CD4-positive, alpha-beta T cell (primary cell): ENCODE measurements at regions of chr11 and their contacts with region 1.

Region 1: DNA sequence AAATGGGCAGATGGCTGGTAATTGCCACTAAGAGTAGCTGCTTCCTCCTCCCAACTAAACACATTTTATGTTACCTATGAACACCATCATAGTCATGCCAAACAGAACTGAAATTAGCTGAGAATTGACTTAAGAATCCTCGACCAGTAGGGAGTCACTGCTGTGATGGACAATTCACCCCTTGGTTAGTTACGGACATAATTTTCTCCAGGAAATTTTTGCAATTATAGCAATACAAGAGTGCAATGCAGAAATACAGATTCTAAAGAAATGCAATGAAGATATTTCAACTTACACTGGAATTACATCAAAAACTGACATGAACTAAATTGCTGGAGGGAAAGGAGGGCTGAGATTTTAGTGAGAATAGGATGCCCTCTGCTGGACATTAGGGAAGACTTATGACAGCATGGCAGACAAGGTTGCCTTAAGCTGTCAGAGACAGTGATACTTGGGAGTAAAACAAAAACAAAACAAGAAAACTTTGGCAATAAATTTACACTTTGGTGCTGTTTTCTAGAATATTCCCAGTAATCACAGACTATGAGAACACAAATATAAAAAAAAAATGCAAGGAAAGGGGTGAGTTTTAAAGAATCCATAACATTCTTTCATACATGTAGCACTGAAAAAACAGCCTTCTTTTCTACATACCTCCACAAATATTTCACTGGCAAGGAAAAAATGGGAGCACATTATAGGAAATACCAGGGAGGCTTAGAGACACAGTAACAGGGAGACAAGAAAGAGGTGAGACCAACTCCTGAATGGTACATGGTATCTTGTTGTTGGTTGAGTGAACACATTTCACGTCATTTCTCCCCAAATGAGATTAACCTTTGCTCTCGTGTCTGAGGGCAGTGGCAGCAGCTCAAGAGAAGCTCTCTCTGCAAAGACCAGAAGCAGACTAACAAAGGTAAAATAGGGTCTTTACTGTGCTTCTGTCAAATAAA is 11.2 kb upstream of the PPP2R1B start:
- DNase-seq: peak in 5 of 14 experiments; percentile 19 to 80 (median 70)
- ATAC-seq: peak; percentile 93
- H3K4me3 ChIP-seq: no peak overlapping the region
- H3K4me3 Mint-ChIP-seq: no peak overlapping the region
- H3K27ac ChIP-seq: no peak overlapping the region
- H3K27ac Mint-ChIP-seq: no peak overlapping the region
- H3K4me1 ChIP-seq: no peaks in the 10 kb centered on the region
- H3K4me1 Mint-ChIP-seq: no peaks in the 10 kb centered on the region
- H3K27me3 ChIP-seq: no peaks in the 10 kb centered on the region
- H3K27me3 Mint-ChIP-seq: no peaks in the 10 kb centered on the region
- CTCF ChIP-seq: peak; percentile 81

Region 2: DNA sequence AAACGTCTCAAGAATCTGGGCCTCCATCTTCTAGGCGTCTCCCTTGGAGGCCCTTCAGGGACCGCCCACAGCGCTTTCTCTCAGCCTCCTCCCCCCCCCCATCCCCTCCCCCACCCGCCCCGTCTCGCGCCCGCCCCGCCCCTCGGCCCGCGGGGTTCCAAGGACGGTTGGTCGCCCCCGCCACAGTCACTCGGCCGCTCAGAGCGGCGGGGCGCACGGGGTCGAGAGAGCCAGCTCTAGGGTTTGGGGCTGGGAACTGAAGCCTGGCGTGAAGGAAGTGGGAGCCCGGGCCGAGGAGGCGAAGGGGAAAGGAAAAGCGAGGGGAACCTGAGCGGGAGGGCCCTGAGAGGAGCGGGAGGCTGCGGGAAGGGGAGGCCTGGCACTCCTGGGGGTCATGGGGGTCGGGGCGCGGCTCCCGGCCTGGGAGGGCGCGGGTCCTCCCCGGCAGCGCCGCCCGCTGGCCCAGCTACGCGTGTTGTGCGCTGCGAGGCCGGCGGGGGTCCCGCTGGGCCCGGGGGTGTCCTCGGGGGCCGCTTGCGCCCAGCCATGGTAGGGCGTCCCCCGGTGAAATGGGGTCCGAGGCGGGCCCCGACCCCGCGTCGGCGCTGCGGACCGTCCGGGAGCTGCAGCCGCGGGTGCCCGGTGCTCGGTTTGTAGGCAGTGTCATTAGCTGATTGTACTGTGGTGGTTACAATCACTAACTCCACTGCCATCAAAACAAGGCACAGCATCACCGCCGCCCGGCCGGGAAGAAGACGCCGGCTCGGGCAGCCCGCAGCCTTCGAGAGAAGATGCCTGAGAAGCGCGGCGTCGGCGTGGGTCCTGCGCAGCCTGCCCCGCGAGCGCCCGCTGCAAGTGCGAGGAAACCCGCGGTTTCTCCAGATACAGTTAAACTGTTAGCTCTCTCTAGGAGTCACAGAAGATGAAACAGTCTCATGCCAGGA is 264.8 kb before region 1 on chr11 and contains the start of gene BTG4:
- CTCF ChIA-PET with region 1: no interaction called
- POLR2A ChIA-PET with region 1: no interaction called
- intact Hi-C with region 1: no loop called
- DNase-seq: peak in 6 of 14 experiments; percentile 8 to 36 (median 23)
- ATAC-seq: peak; percentile 49
- H3K4me3 ChIP-seq: peak within 1 kb of the TSS; percentile 24
- H3K4me3 Mint-ChIP-seq: peak within 1 kb of the TSS; percentile 43
- H3K27ac ChIP-seq: no peak within 1 kb of the TSS
- H3K27ac Mint-ChIP-seq: no peak within 1 kb of the TSS
- H3K4me1 ChIP-seq: peaks cover 9% of the 10 kb centered on the region
- H3K4me1 Mint-ChIP-seq: peaks cover 20% of the 10 kb centered on the region
- H3K27me3 ChIP-seq: peaks cover 24 to 43% of the 10 kb centered on the region in 2 experiments
- H3K27me3 Mint-ChIP-seq: peaks cover 54% of the 10 kb centered on the region
- CTCF ChIP-seq: no peak
- total RNA-seq, gene BTG4: not detected

Region 3: DNA sequence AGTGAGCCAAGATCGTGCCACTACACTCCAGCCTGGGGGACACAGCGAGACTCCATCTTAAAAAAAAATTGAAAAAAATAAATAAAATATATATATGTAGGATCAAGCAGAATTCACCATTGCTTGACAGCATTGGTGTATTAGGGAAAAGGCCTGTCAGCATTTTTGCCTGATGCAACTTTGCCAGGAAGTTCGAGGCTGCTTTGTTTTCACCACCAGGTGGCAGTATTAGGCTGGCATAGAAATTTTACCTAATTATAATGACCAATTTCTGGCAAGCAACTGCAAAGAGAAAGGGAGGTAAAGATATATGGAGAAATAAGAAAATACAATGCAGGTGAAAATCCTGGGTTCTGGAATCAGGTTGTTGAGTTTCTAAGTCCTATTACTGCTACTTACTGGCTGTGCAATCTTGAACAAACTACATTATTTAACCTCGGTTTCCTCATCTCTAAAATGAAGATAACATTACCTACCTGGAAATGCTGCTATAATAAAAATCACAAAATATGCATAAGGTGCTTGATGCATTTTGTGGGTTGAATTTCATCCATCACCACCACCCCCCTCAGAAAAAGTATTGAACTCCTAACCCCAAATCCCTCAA is 212.2 kb before region 1 on chr11:
- CTCF ChIA-PET with region 1: interaction called, 4 read pairs
- POLR2A ChIA-PET with region 1: no interaction called
- intact Hi-C with region 1: loop called (anchors 1 kb)
- DNase-seq: peak; percentile 30 to 78 (median 48)
- ATAC-seq: no peak
- H3K4me3 ChIP-seq: no peak overlapping the region
- H3K4me3 Mint-ChIP-seq: no peak overlapping the region
- H3K27ac ChIP-seq: no peak overlapping the region
- H3K27ac Mint-ChIP-seq: no peak overlapping the region
- H3K4me1 ChIP-seq: no peaks in the 10 kb centered on the region
- H3K4me1 Mint-ChIP-seq: no peaks in the 10 kb centered on the region
- H3K27me3 ChIP-seq: peaks cover 0 to 2% of the 10 kb centered on the region in 2 experiments
- H3K27me3 Mint-ChIP-seq: no peaks in the 10 kb centered on the region
- CTCF ChIP-seq: peak; percentile 96

Region 4: GRCh38 chr11:111586388-111586831 is 191.0 kb before region 1 on chr11:
- CTCF ChIA-PET with region 1: interaction called, 32 read pairs
- POLR2A ChIA-PET with region 1: interaction called, 3 read pairs
- intact Hi-C with region 1: loop called (anchors 1 kb)
- DNase-seq: peak in 10 of 14 experiments; percentile 11 to 78 (median 38)
- ATAC-seq: peak; percentile 74
- H3K4me3 ChIP-seq: no peak overlapping the region
- H3K4me3 Mint-ChIP-seq: no peak overlapping the region
- H3K27ac ChIP-seq: no peak overlapping the region
- H3K27ac Mint-ChIP-seq: no peak overlapping the region
- H3K4me1 ChIP-seq: no peaks in the 10 kb centered on the region
- H3K4me1 Mint-ChIP-seq: no peaks in the 10 kb centered on the region
- H3K27me3 ChIP-seq: peaks cover 3 to 6% of the 10 kb centered on the region in 2 experiments
- H3K27me3 Mint-ChIP-seq: no peaks in the 10 kb centered on the region
- CTCF ChIP-seq: peak; percentile 72

Region 5: DNA sequence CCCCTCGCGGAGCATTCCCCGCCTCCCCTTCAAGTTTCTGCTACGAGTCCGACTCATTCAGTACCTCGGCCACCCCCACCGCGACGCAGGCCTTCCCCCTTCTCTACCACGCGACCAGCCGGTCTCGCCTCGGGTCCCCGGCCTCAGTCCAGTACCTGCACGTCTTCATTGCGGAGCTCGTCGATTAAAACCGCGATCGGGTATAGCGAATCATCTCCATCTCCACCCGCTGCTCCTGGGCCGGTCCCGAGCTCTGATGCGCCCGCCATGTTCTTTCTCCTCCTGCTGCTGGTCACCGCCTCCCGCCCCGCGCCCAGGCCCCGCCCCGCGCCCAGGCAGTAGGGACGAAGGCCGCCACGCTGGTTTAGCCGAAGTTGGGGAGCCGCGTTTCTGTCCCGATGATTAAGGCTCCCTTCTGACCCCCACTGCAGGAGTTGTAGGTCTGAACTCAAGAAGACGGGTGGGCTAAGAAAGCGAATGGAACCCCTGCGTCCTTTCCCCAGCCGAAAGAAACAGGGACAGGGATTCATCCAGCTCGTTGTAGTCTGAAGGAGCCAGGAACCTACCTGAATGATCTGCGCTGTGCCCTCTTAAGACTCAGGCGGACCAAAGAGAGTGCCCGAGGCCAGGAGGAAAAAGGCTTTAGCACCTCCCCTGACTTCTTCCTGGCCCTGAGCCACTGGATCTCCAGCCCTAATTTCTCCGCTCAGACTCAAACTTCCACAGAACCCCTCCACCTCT is 11.1 kb before region 1 on chr11 and contains the start of gene PPP2R1B:
- CTCF ChIA-PET with region 1: interaction called, 18 read pairs
- POLR2A ChIA-PET with region 1: interaction called, 3 read pairs
- intact Hi-C with region 1: no loop called
- DNase-seq: peak; percentile 52 to 85 (median 64)
- ATAC-seq: peak; percentile 97
- H3K4me3 ChIP-seq: peak within 1 kb of the TSS; percentile 85
- H3K4me3 Mint-ChIP-seq: peak within 1 kb of the TSS; percentile 99
- H3K27ac ChIP-seq: peak within 1 kb of the TSS; percentile 16 to 67
- H3K27ac Mint-ChIP-seq: peak within 1 kb of the TSS; percentile 70
- H3K4me1 ChIP-seq: peaks cover 12% of the 10 kb centered on the region
- H3K4me1 Mint-ChIP-seq: peaks cover 41% of the 10 kb centered on the region
- H3K27me3 ChIP-seq: no peaks in the 10 kb centered on the region
- H3K27me3 Mint-ChIP-seq: no peaks in the 10 kb centered on the region
- CTCF ChIP-seq: no peak
- total RNA-seq, gene PPP2R1B: 34.5 to 39.2 TPM

Region 6: GRCh38 chr11:111841370-111842053 is 64.1 kb after region 1 on chr11:
- CTCF ChIA-PET with region 1: interaction called, 4 read pairs
- POLR2A ChIA-PET with region 1: no interaction called
- intact Hi-C with region 1: loop called (anchors 5 kb)
- DNase-seq: peak; percentile 72 to 93 (median 82)
- ATAC-seq: peak; percentile 97
- H3K4me3 ChIP-seq: no peak overlapping the region
- H3K4me3 Mint-ChIP-seq: no peak overlapping the region
- H3K27ac ChIP-seq: no peak overlapping the region
- H3K27ac Mint-ChIP-seq: no peak overlapping the region
- H3K4me1 ChIP-seq: no peaks in the 10 kb centered on the region
- H3K4me1 Mint-ChIP-seq: peaks cover 5% of the 10 kb centered on the region
- H3K27me3 ChIP-seq: no peaks in the 10 kb centered on the region
- H3K27me3 Mint-ChIP-seq: no peaks in the 10 kb centered on the region
- CTCF ChIP-seq: peak; percentile 94